Right ventricle myocardium superior (tissue), 1 donor: ENCODE measurements at regions of chr19 and their contacts with region 1.

Region 1: GRCh38 chr19:41872775-41873647 is 4.1 kb upstream of the CD79A start:
- DNase-seq: peak; percentile 82
- ATAC-seq: peak; percentile 74

Region 2: DNA sequence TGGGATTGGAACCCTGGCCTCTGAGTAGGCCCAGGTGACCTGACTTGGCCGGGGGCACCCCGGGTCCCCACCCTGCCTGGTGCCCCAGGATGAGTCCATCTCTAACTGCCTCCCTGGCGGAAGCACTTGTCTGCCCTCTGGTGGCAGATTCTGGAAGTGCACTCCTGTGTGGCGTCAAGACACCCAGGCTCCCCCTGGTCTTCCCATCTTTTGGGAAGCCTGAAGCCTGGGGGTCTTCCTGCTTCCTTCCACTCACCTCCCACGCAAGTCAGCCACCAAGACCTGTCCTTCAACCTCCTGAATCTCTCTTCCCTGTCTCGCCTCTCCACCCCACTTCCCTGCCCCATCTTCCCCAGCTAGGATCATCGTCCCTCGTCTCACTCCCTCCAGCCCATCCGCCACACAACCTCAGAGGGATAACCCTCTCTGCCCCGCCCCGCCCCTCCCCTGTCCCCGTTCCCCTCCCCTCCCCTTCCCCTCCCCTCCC is 78.7 kb after region 1 on chr19:
- intact Hi-C with region 1: loop called (anchors 5 kb)
- DNase-seq: peak; percentile 85
- ATAC-seq: peak; percentile 82